ENCODE measurements at regions of chr14 and their contacts with region 1.

Region 1: DNA sequence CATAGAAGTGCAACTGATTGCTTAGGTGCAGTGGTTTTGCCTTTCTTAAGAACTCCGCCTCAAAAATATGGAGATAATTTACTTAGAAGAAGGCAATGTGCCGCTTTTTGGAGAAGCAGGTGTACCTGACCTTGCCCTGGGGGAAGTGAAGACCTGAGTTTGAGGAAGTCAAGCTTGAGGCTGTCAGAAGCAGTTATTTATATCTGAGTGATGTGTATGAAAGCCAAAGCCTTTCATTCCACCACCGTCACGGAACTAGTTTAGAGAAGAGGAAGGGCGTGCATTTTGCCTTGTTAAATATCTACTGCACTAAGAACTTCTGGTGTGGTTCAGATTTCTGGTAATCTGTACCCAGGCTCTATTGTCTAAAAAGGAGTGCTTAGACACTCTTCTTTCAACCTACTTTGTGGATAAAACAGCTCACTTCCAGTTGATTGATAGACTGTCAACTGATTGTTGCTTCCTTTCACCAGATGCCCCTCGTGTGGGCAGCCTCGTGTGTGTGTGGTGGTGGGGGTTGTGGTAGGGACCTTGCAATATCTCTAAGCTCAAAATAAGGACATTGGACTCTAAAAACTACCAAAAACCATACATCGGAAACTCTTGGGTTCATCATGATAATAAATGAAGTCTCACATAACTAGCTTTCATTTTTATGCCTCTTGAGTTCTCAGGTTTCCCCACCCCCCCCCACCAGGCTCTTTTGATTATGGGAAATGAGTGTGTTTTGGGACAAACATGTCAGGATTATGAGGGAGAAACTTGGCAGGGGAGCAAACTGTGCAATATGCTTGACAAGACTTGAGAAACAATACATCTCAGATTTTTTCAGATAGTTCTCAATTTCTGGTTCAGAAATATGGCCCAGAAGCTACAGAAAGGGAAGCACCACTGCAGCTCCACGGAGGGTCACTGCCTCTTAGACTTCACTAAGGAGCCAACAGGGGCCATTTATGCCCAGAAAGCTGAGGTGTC is 78.6 kb downstream of the ARF6 start:
- DNase-seq: no peak
- H3K4me3 ChIP-seq: no peak overlapping the region
- H3K27ac ChIP-seq: peak overlapping the region; percentile 74 to 80
- H3K4me1 ChIP-seq: peaks cover 0 to 4% of the 10 kb centered on the region in 2 donors
- H3K27me3 ChIP-seq: no peaks in the 10 kb centered on the region
- CTCF ChIP-seq: no peak
- POLR2A ChIP-seq: no peak

Region 2: DNA sequence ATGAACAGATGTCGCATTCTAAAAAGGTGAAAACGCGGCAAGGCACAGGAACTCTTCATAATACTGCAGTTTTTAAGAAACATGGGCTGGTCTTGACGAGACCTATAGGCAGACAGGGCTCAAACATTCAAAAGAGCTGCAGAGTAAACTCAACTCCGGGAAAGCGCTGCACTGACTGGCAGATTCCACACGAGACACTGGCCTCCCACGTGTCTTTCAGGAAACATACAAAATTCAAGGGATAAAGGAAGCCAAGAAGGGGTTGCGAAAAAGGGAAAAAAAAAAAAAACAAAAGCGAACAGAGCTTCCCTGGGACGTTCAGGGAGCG is 79.2 kb before region 1 on chr14:
- intact Hi-C with region 1: no loop called
- DNase-seq: peak in 1 of 2 donors; percentile 69
- H3K4me3 ChIP-seq: peak overlapping the region; percentile 83 to 100
- H3K27ac ChIP-seq: peak overlapping the region; percentile 99 to 100
- H3K4me1 ChIP-seq: peaks cover 10 to 14% of the 10 kb centered on the region in 2 donors
- H3K27me3 ChIP-seq: no peaks in the 10 kb centered on the region
- CTCF ChIP-seq: no peak
- POLR2A ChIP-seq: no peak

Region 3: DNA sequence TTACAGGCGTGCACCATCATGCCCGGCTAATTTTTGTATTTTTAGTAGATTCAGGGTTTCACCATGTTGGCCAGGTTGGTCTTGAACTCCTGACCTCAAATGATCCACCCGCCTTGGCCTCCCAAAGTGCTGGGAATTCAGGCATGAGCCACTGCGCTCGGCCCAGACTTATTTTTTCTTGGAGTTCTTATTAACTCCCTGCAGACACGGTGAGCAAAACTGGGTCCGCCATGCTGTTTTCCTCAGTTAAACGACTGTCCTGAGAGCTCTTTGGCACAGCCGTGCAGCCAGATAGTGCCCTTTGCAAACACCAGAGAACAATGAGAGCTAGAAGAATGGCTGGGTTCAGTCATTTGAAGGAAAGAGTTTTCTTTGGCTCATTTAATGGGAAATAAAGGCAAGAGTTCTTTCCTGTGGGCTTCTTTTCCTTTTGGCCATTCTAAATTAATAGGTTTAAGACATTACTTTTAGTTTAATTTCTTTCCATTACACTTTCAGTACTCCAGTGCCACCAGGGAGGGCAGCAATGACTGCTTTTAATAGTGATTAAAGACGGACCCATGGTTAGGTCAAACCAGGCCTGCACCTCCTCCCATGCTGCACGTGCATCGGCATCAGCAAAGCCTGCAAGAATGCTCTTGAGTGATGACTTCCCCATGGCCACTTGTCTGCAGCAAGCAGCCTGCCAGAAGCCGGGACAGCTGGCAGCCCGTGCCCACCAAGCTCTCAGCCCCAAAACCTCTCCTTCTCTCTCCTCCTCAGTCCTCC is 84.2 kb after region 1 on chr14:
- intact Hi-C with region 1: loop called (anchors 10 kb)
- DNase-seq: no peak
- H3K4me3 ChIP-seq: no peak overlapping the region
- H3K27ac ChIP-seq: no peak overlapping the region
- H3K4me1 ChIP-seq: no peaks in the 10 kb centered on the region
- H3K27me3 ChIP-seq: no peaks in the 10 kb centered on the region
- CTCF ChIP-seq: no peak
- POLR2A ChIP-seq: no peak

Measured in uterus (tissue), 4 donors.